ENCODE measurements at regions of chr19 and their contacts with region 1.

Region 1: GRCh38 chr19:32224371-32225244 is 120.8 kb upstream of the ZNF507 start:
- DNase-seq: peak; percentile 80
- ATAC-seq: peak; percentile 75
- H3K4me3 Mint-ChIP-seq: peak overlapping the region; percentile 51
- H3K27ac Mint-ChIP-seq: no peak overlapping the region
- H3K4me1 Mint-ChIP-seq: peaks cover 13% of the 10 kb centered on the region
- H3K27me3 Mint-ChIP-seq: peaks cover 28% of the 10 kb centered on the region

Region 2: DNA sequence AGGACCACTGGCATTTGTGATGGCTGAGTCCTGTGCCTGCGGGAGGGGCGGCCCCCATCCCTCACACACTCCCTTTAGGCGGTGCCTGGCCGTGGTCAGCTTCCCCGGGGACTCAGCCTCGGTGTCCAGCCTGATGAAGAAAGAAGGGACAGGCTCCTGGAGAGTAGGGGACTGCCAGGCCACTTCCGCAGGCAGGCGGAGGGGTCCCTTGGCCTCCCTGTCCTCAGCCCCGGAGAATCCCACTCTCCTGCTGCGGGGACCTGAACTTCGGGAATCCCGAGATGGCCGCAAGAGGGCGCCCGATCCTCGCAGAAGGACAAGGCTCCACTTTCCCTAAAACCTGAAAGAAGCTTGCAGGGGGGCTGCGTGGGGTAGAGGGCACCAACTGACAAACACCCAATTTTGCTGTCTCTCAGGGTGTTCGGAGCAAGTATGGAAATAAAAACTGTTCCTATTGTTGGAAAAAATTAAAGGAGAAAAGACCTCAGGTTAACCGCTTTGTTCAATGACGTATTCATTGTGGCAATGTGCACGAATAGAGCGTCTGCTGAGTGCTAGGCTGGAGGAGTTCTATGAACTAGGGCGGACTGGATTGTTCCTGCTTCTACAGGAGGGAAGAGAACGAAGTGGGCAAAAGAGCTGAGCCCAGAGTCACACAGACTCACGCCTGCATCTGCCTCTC is 1555.1 kb before region 1 on chr19:
- CTCF ChIA-PET with region 1: interaction called, 5 read pairs
- POLR2A ChIA-PET with region 1: no interaction called
- intact Hi-C with region 1: loop called (anchors 1 to 5 kb)
- DNase-seq: peak; percentile 72
- ATAC-seq: no peak
- H3K4me3 Mint-ChIP-seq: no peak overlapping the region
- H3K27ac Mint-ChIP-seq: no peak overlapping the region
- H3K4me1 Mint-ChIP-seq: no peaks in the 10 kb centered on the region
- H3K27me3 Mint-ChIP-seq: peaks cover 16% of the 10 kb centered on the region

Region 3: DNA sequence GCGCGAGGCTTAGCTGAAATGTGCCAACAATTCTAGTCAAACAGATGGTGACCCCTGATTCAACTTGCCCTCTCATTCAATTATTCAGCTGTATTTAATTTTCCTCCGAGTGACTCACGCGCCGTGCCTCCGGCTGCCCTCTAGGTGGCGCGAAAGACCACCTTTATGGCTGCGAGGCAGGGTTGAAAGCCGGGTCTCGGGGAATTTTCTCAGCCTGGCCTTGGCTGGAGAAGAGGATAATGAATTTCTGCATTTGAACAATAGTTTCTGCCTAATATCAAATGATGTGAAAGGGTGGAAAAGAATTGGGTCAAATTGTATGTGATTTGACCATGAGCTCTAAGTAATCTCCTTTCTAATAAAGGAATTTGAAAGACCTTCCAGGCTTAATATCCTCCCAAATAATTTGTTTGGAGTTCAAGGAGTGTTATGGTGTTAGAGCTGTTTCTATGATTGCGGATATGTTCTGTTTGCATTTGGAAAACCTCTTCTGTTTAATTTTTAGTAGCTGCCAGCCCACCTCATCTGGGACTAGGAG is 1541.5 kb before region 1 on chr19:
- CTCF ChIA-PET with region 1: interaction called, 9 read pairs
- POLR2A ChIA-PET with region 1: no interaction called
- intact Hi-C with region 1: loop called (anchors 2 kb)
- DNase-seq: peak; percentile 76
- ATAC-seq: no peak
- H3K4me3 Mint-ChIP-seq: no peak overlapping the region
- H3K27ac Mint-ChIP-seq: no peak overlapping the region
- H3K4me1 Mint-ChIP-seq: no peaks in the 10 kb centered on the region
- H3K27me3 Mint-ChIP-seq: peaks cover 28% of the 10 kb centered on the region

Region 4: DNA sequence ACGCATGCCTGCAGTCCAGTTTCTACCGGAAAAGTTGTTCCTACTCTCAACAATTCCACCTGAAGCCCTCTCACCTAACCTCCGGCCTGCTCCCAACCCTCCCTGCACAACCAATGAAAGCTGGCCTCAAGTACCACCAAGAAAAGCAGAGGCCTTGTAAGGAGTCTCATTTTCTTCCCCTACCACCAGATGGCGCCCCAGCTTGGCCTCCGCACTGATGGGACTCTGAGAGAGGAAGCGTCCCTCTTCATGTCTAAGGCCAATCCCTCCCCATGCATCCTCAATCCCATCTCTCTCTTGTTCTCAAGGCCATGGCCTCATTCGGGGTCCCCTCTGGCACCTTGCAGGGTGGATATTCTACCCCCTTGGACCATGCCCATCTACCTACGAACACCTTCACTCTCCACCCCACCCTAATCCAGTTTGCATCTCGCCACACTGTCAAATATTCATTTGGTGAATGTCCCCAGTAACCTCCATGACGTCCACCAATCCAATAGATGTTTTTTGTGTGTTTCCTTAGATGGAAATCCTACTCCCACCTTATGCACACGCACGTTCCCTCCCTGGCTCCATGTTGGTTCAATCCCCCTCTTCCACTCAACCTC is 1439.7 kb before region 1 on chr19:
- CTCF ChIA-PET with region 1: interaction called, 3 read pairs
- POLR2A ChIA-PET with region 1: no interaction called
- intact Hi-C with region 1: loop called (anchors 1 to 2 kb)
- DNase-seq: peak; percentile 78
- ATAC-seq: peak; percentile 51
- H3K4me3 Mint-ChIP-seq: no peak overlapping the region
- H3K27ac Mint-ChIP-seq: no peak overlapping the region
- H3K4me1 Mint-ChIP-seq: no peaks in the 10 kb centered on the region
- H3K27me3 Mint-ChIP-seq: peaks cover 10% of the 10 kb centered on the region

Region 5: DNA sequence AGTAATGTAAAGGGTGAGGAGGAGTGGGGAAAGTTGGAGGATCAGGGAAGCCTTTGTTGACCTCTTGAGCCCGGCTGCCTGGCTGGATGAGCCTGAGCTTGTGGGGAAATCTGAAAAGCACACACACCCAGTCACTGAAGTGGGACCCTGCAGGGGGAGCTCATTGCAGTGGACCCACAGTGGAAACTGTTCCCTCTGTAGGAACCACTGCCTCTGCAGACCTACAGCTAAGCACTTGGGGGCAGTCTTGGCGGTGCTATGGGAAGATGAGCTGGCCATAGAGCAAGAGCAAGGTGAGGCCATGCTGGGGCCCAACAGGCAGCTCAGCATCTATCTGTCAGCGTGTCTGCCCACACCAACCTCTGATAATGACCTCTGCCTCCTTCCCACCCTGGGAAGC is 1170.2 kb before region 1 on chr19:
- CTCF ChIA-PET with region 1: interaction called, 7 read pairs
- POLR2A ChIA-PET with region 1: no interaction called
- intact Hi-C with region 1: loop called in 1 of 2 experiments (anchors 1 kb)
- DNase-seq: peak; percentile 62
- ATAC-seq: peak; percentile 69
- H3K4me3 Mint-ChIP-seq: no peak overlapping the region
- H3K27ac Mint-ChIP-seq: no peak overlapping the region
- H3K4me1 Mint-ChIP-seq: no peaks in the 10 kb centered on the region
- H3K27me3 Mint-ChIP-seq: peaks cover 18% of the 10 kb centered on the region

Region 6: GRCh38 chr19:32041681-32042292 is 182.8 kb before region 1 on chr19:
- CTCF ChIA-PET with region 1: interaction called, 3 read pairs
- POLR2A ChIA-PET with region 1: no interaction called
- intact Hi-C with region 1: loop called in 1 of 2 experiments (anchors 5 kb)
- DNase-seq: peak; percentile 71
- ATAC-seq: peak; percentile 26
- H3K4me3 Mint-ChIP-seq: no peak overlapping the region
- H3K27ac Mint-ChIP-seq: no peak overlapping the region
- H3K4me1 Mint-ChIP-seq: no peaks in the 10 kb centered on the region
- H3K27me3 Mint-ChIP-seq: peaks cover 26% of the 10 kb centered on the region

Region 7: GRCh38 chr19:32200312-32201038 is 24.1 kb before region 1 on chr19:
- CTCF ChIA-PET with region 1: no interaction called
- POLR2A ChIA-PET with region 1: no interaction called
- intact Hi-C with region 1: no loop called
- DNase-seq: no peak
- ATAC-seq: no peak
- H3K4me3 Mint-ChIP-seq: no peak overlapping the region
- H3K27ac Mint-ChIP-seq: no peak overlapping the region
- H3K4me1 Mint-ChIP-seq: peaks cover 3% of the 10 kb centered on the region
- H3K27me3 Mint-ChIP-seq: peaks cover 6% of the 10 kb centered on the region

Region 8: GRCh38 chr19:32251634-32252332 is 27.2 kb after region 1 on chr19:
- CTCF ChIA-PET with region 1: no interaction called
- POLR2A ChIA-PET with region 1: no interaction called
- intact Hi-C with region 1: no loop called
- DNase-seq: no peak
- ATAC-seq: no peak
- H3K4me3 Mint-ChIP-seq: no peak overlapping the region
- H3K27ac Mint-ChIP-seq: no peak overlapping the region
- H3K4me1 Mint-ChIP-seq: no peaks in the 10 kb centered on the region
- H3K27me3 Mint-ChIP-seq: peaks cover 4% of the 10 kb centered on the region